ENCODE measurements at regions of chr2 and their contacts with region 1.

Region 1: DNA sequence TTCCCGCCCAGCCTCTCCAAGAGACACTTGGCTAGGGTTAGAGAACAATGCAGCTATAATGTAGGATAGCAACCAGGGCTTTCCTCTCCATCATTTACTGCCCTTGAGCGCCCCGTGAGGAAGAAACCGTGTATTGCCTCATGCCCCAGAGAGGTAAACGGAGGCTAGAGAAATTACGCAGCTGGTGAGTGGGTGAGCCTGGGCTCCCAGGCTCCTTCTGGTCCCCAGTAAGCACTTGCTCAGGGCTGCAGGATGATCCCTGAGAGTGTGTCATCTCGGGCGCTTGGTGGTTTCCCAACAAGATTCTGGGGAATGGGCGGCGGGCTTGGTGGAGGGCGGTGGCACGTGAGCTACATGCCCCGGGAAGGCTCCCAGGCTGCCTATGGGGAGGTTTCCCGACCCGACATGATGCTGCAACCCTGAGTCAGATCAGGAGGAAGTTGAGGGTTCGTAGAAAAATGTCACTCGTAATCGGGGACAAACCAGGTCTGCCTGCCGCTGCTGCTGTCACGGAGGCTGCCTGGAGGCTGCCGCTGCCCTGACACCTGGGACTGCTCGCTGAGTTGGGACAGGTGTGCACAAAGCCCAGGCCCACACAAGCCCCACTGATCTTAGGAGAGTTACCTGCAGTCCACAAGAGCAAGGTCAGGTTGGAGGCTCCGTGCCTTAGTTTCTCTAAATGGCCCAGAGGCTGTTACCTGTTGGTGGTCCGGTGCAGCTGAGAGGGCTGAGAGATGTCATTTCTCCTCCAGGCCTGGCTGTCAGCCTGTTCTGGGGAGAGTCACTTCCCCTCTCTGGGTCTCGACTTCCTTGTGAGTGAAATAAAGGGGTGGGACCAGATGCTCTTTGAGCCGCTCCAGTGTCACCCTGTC is at the start of gene GPR55:
- DNase-seq: peak; percentile 89
- ATAC-seq: peak; percentile 57
- H3K4me3 Mint-ChIP-seq: peak within 1 kb of the TSS; percentile 74
- H3K27ac Mint-ChIP-seq: peak within 1 kb of the TSS; percentile 98
- H3K4me1 Mint-ChIP-seq: peaks cover 73% of the 10 kb centered on the region
- H3K27me3 Mint-ChIP-seq: no peaks in the 10 kb centered on the region
- CTCF ChIP-seq: peak; percentile 47
- total RNA-seq, gene GPR55: 5.0 to 5.3 TPM

Region 2: DNA sequence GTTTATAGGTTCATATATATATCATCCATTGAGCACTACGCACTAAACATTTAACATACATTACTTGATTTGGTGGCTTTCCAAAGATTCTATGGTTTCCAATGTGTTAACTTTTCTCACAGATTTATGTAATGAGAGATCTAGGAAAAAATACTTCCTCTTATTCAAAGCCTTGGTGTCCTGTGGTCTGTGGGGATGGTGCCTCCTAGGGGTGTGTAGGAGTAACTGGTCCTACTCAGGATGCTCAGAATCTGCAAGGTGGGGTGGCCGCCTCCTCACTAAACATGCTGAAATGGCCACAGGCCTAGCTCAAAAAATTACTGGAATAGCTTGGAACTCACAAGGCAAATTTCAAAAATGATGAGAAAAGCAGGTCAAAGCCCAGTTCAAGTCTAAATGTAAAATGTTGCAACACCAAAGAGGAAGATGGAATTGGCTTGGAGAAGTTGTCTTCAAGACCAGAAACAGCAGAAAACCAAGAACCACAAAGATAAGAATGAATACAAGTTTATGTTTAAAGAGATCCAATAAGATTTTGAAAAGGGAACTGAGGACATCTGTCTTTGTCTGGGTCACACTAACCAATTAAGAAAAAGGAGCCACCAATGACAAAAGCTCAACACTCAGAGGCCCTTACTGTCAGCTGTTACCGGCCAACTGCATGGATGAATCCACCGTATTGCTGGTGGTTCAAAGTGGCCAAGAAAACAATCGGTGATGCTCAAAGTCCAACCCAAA is 11.1 kb before region 1 on chr2:
- CTCF ChIA-PET with region 1: interaction called, 72 read pairs
- POLR2A ChIA-PET with region 1: interaction called, 42 read pairs
- intact Hi-C with region 1: no loop called
- DNase-seq: peak; percentile 58
- ATAC-seq: peak; percentile 50
- H3K4me3 Mint-ChIP-seq: no peak overlapping the region
- H3K27ac Mint-ChIP-seq: no peak overlapping the region
- H3K4me1 Mint-ChIP-seq: peaks cover 69% of the 10 kb centered on the region
- H3K27me3 Mint-ChIP-seq: peaks cover 2% of the 10 kb centered on the region
- CTCF ChIP-seq: peak; percentile 58

Region 3: DNA sequence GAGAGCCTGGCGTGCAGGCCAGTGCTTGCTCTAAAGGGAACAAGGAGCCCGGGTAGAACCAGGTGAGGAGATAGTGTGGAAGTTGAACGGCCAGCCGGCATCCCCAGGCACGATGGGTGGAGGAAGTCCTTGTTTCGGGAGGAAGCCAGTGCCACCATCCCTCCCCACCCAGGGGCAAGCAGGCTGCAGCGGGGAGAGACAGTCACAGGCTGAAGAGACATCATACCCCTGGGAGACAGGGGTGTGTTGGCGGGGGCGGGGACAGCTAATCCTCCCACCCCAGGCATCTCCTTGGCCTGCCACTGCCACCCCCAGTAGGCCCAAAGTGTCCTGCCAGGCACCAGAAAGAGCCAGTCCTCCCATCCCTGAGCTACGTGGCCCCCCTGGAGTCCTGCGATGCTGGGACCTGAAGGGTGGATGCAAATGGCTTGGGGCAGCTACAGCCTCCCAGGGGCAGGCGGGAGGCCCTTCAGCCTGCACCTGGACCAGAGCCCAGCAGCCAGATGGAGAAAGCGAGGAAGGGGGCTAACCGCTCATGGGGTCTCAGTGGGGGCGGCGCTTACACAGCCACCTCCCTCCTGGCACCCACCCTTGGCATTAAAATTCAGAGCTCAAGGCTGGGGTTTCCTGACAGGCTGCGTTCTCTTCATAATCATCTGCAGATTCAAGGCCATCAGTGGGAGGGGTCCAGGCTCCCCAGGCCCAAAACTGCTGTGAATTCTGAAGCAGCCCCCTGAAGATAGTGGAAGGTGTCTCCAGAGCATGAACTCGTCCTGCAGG is 15.2 kb after region 1 on chr2:
- CTCF ChIA-PET with region 1: interaction called, 10 read pairs
- POLR2A ChIA-PET with region 1: interaction called, 5 read pairs
- intact Hi-C with region 1: no loop called
- DNase-seq: no peak
- ATAC-seq: no peak
- H3K4me3 Mint-ChIP-seq: no peak overlapping the region
- H3K27ac Mint-ChIP-seq: no peak overlapping the region
- H3K4me1 Mint-ChIP-seq: peaks cover 19% of the 10 kb centered on the region
- H3K27me3 Mint-ChIP-seq: no peaks in the 10 kb centered on the region
- CTCF ChIP-seq: no peak

Region 4: GRCh38 chr2:230947908-230948365 is 23.2 kb after region 1 on chr2:
- CTCF ChIA-PET with region 1: interaction called, 9 read pairs
- POLR2A ChIA-PET with region 1: interaction called, 11 read pairs
- intact Hi-C with region 1: no loop called
- DNase-seq: peak; percentile 62
- ATAC-seq: peak; percentile 19
- H3K4me3 Mint-ChIP-seq: peak overlapping the region; percentile 49
- H3K27ac Mint-ChIP-seq: peak overlapping the region; percentile 60
- H3K4me1 Mint-ChIP-seq: peaks cover 48% of the 10 kb centered on the region
- H3K27me3 Mint-ChIP-seq: no peaks in the 10 kb centered on the region
- CTCF ChIP-seq: no peak

Region 5: DNA sequence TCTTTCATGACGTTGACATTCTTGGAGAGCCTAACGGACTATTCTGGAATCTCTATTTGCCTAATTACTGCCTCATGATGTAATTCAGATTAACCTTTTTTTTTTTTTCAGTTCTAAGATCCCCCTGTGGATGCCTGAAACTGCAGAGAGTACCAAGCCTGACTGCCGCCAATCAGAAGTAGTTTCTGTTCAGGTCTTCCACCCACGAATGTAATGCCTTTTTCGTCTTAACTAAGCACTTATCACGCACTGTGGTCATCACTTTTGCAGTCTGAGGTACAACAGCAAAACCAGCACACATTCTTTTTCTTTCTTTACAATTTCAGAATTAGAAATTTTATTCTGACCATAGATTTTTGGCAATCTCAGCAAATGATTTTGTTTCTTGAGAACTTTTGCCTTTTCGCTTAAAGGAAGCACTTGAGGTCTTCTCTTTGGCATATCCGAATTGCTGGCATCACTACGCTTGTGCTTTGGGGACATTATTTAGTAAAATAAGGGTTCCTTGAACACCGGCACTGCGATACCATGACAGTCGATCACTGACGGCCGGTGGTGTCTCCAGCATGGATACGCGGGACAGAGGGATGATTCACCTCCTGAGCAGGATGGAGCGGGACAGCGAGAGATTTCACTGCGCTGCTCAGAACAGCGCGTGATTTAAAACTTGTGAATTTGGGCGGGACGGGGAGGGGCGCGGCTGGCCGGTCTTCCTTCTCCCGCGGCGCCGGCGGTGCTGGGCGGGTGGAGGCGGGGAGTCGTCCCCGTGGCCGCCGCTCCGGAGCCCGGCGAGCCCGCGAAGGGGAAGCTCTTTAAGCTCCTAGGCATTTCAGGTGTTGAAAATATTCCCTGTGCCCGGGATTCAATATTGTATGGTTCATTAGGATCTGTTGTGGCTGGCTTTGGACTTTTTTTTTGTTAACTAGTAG is 32.4 kb after region 1 on chr2:
- CTCF ChIA-PET with region 1: interaction called, 6 read pairs
- POLR2A ChIA-PET with region 1: interaction called, 12 read pairs
- intact Hi-C with region 1: no loop called
- DNase-seq: peak; percentile 78
- ATAC-seq: peak; percentile 91
- H3K4me3 Mint-ChIP-seq: peak overlapping the region; percentile 84
- H3K27ac Mint-ChIP-seq: peak overlapping the region; percentile 96
- H3K4me1 Mint-ChIP-seq: peaks cover 45% of the 10 kb centered on the region
- H3K27me3 Mint-ChIP-seq: peaks cover 25% of the 10 kb centered on the region
- CTCF ChIP-seq: no peak

Region 6: DNA sequence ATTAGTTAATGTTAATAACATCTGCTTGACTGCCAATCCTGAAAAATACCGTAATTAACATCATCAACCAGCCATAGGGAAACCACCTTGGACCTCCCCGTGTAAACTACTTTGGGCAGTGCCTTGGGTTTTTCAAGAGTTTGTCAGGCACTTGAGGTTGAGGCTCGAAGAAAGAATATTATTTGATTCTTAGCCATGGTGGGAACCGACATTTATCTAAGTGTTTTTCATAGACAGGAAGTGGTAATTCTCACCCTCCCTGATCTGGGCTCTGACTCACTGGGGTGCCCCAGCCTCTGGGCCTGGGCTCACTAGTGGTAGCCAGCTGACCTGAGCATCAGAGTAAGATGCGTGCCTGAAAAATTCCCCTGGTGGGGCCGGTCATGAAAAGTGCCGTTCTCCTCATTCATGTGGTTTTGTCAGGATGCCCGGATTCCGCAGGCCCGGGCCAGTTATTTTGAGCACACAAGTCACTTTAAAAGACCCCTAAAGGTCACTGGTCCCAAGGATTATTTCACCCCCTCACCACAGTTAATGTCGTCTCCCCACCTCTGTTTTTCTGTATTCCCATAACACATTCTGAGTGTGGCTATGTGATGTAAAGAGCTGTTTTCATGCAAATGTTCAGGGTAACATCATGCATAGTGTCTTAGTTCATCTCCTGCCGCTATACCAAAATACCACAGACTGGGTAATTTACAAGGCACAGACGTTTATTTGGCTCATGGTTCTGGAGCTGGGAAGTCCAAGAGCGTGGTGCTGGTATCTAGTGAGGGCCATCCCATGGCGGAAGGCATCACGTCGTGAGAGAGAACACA is 49.6 kb after region 1 on chr2:
- CTCF ChIA-PET with region 1: interaction called, 22 read pairs
- POLR2A ChIA-PET with region 1: interaction called, 3 read pairs
- intact Hi-C with region 1: loop called (anchors 2 kb)
- DNase-seq: peak; percentile 95
- ATAC-seq: peak; percentile 91
- H3K4me3 Mint-ChIP-seq: peak overlapping the region; percentile 50
- H3K27ac Mint-ChIP-seq: peak overlapping the region; percentile 90
- H3K4me1 Mint-ChIP-seq: peaks cover 70% of the 10 kb centered on the region
- H3K27me3 Mint-ChIP-seq: no peaks in the 10 kb centered on the region
- CTCF ChIP-seq: no peak